Mammary epithelial cell (primary cell): ENCODE measurements at regions of chr7 and their contacts with region 1.

Region 1: GRCh38 chr7:105141068-105141467 is 127.1 kb downstream of the KMT2E start:
- DNase-seq: no peak
- H3K4me3 ChIP-seq: no peak overlapping the region
- H3K27ac ChIP-seq: no peak overlapping the region
- H3K4me1 ChIP-seq: no peaks in the 10 kb centered on the region
- H3K27me3 ChIP-seq: no peaks in the 10 kb centered on the region
- CTCF ChIP-seq: peak; percentile 17 to 32

Region 2: GRCh38 chr7:105336009-105336408 is 194.9 kb after region 1 on chr7:
- CTCF ChIA-PET with region 1: no interaction called
- dilution Hi-C with region 1: no loop called
- in situ Hi-C with region 1: loop called in 1 of 2 experiments (anchors 25 kb)
- intact Hi-C with region 1: loop called (anchors 5 kb)
- DNase-seq: no peak
- H3K4me3 ChIP-seq: no peak overlapping the region
- H3K27ac ChIP-seq: no peak overlapping the region
- H3K4me1 ChIP-seq: peaks cover 4% of the 10 kb centered on the region
- H3K27me3 ChIP-seq: no peaks in the 10 kb centered on the region
- CTCF ChIP-seq: peak; percentile 28 to 34